ENCODE measurements at regions of chr2 and their contacts with region 1.

Region 1: DNA sequence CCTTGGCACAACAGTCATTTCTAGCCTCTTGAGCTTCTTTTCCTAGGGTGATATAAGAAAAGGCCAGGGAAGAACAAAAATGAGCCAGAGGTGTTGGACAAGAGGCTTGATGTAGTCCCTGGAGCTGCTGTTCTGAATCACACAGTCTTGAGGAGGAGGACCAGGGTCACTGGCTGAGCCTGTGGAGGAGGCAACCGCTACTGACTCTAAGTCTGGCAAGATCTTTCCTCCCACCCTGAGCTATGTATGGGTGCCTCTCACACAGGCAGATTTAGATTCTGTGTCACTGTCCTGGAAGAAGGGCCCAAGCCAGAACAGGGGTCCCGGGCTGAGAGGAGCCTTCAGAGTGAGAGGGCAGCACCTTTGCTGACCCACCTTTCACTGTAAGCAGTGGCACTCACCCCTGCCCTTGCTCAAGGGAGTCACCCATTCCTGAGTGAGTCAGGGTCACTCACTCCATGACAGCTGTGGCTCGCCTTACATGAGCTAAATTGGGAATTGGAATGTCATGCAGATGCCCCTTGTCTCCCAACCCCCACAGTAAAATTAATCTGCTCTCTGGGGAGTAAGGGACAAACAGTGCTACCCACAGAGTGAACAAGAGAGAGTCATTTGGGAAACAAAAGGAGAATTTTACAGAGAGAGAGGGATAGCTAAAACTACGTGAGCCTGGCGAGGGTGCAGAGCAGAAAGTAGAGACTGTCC is at the start of gene TRIM54:
- DNase-seq: no peak
- ATAC-seq: peak; percentile 86 to 88
- H3K4me3 ChIP-seq: peak within 1 kb of the TSS; percentile 62
- H3K27ac ChIP-seq: peak within 1 kb of the TSS; percentile 99
- H3K4me1 ChIP-seq: no peaks in the 10 kb centered on the region
- H3K27me3 ChIP-seq: no peaks in the 10 kb centered on the region
- total RNA-seq, gene TRIM54: 101 to 188 (median 149) TPM

Region 2: DNA sequence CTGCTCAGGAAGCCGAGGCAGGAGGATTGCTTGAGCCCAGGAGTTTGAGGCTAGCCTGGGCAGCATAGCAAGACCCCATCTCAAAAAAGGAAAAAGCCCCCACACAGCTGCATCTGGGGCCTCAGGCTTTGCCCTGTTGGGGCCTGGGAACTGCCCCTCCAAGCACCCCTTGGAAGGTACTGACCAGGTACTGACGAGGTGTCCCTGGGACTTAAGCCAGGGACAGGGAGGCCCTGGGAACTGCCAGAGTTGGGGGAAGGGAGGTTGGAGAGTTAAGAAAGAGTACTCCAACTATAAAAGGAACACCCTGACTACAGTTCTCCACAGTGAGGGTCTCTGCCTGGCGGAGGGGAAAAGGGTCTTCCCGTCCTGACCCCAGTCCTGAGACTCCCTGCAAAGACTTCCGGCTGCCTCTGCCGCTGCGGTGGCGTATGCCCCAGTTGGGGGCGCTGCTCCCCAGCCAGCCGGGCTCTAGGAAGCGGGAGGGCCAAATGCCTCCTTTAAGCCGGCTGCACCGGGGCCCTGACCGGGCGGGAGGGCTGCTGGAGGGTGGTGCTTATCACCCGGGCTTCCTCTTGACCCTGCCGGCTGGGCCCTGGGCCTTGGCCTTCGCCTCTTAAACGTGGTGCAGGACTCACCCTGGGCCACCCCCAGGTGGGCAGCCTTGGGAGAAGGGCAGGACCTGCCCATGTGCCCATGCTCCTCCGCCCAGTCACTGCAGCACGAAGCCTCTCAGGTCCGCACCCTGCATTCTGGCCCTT is 31.9 kb before region 1 on chr2:
- intact Hi-C with region 1: loop called in 1 of 4 experiments (anchors 5 kb)
- DNase-seq: peak; percentile 57 to 86 (median 83)
- ATAC-seq: peak; percentile 73 to 85
- H3K4me3 ChIP-seq: no peak overlapping the region
- H3K27ac ChIP-seq: no peak overlapping the region
- H3K4me1 ChIP-seq: no peaks in the 10 kb centered on the region
- H3K27me3 ChIP-seq: no peaks in the 10 kb centered on the region